GM18951 (cell line): ENCODE measurements at regions of chr6 and their contacts with region 1.

Region 1: DNA sequence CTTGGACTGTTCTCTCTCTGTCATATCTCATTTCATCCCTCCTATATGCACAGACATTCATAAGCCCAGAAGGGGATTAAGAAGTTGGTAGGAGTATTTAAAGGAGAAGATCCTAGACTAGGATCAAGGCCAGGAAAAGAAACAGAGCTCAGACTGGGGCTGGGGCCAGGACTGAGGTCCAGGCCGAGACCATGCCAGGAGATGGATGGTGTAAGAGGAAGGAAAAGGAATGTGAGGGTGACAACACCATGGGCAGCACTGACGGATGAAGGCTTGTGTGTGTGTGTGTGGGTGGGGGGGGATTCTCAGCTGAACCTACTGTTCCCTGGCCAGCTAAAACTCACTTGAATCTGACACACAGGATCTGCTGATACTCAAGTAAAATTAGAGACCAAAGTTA is 182.1 kb downstream of the KIF6 start:
- POLR2A ChIP-seq: no peak

Region 2: DNA sequence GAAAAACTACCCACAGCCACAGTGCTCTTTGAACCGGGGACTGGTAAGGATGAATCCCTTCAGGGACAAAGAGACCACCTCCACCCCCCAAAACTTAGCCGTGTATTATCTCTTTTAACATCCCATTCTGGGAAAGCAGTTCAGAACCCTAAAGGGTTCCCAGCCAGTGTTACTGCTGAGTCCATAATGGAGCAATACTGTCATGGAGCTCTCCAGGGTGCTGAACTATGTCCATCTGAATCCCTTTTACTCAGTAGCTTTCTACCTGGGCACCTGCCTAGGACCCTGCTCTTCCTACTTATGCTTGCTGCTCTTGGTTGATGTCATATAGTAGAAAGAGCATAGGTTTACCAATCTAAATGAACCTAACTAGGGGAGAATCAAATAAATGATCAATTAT is 405.9 kb before region 1 on chr6:
- in situ Hi-C with region 1: no loop called
- POLR2A ChIP-seq: no peak

Region 3: DNA sequence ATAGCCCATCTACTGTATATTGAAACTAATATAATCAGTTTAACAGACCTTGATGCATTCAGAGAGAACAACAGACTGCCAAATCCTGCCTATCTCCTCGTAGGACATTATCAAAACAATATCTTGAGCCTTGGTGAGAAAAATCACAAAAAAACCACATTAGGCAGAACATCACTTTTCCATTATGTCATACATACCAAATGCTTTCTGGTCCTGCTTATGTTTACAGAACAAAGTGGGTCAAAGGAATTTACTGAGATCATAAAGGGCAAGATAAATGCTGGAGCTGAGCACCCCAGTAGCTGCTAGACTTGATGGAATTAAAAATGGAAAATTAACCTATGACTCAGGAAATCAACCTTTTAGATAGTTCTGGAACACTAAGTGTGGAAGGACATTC is 25.3 kb before region 1 on chr6:
- in situ Hi-C with region 1: no loop called
- POLR2A ChIP-seq: no peak

Region 4: DNA sequence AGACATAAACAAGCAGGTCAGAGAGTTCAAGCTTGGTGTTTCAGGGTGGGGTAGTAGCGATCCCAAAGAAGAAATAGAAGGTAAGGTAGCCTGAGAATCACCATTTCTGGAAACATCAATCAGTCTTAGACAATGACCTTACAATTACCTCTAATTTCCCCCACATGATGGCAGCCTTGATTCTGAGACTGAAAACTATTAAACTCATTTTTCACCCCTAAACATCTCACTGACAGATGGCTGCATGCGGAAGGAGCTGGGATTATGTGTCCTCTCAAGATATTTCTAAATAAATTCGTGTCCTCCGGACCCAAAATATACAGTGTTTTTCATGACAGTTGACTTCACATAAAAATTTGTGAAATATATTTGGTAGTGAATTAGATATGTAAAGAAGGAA is 121.1 kb after region 1 on chr6:
- in situ Hi-C with region 1: no loop called
- POLR2A ChIP-seq: no peak

Region 5: DNA sequence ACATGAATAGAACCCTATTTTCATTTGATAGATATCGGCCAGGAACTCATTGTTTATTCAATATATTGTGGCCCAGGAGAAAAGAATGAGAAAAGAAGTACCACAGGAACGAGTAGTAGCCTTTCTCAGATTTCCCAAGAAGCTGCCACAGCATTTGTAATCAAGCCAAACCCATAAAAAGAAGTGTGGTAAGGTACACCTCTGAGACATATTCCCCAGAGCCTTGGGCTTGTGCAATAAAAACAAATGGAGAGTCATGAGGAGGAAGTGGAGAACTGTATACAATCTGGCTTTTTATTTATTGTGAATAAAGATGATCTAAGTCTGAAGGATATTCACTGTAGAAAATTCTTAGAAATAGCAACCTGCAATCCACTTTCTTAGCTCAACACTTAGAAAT is 145.4 kb after region 1 on chr6:
- in situ Hi-C with region 1: loop called (anchors 10 kb)
- POLR2A ChIP-seq: no peak